A549 (cell line): ENCODE measurements at regions of chr3 and their contacts with region 1.

Region 1: DNA sequence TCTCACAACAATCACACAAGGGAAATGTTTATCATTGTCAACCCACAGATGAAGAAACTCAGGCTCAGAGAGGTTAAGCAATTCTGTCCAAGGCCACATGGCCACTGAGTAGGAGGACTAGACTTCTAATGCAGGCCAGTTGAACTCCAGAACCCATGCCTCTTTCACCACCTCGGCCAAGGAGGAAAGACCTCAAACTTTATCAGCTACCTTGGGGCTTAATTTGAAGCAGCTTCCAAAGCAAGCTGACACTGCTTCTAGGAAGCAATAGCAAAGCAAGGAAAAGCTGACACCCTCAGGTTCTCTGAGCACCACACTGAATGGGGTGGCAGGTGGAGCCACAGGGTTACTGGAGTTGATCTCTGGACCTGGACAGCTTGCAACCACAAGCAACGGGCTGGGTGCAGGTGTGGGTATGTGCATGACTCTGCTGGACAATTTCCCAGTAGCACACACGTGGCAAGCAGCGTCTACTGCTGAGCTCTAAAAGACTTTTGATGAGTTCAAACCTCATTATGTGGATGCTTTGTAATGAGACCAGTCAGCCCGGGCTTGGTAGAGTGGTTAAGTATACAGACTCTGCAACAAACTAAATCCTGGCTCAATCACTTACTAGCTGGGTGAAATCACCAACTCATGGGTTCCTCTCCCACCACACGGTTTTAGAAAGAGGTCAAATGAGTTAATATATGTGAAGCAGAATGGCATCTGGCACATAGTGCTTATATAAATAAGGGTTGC is 23.1 kb downstream of the CCNL1 start:
- DNase-seq: no peak
- ATAC-seq: peak; percentile 5 to 31; a peak in 4 of 6 replicates
- H3K4me3 ChIP-seq: no peak overlapping the region
- H3K27ac ChIP-seq: peak overlapping the region; percentile 26 to 59; a peak in 4 of 6 replicates
- H3K4me1 ChIP-seq: peaks cover 33% of the 10 kb centered on the region
- CTCF ChIP-seq: no peak
- EP300 ChIP-seq: no peak
- POLR2A ChIP-seq: no peak
- RAD21 ChIP-seq: no peak

Region 2: DNA sequence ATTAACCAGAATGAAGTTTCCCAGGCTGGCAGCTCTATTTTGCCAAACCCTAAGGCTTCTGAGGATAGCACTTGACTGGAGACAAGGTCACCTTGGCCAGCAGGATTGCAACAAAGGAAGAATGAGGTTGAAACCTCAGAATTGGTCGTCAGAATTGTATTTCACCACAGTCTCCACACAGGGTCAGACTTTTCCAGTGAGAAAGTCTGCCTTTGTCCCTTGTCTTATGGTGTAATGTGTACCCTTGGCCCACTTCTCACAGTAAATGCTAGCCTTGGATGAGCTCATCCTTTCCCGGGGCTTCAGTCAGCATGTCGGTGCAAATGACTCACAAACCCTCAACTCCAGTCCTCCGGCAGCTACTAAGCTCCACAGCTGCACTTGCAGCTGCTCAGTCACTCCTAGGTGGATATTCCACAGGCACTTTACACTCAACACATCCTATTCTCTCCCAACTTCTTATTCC is 601.6 kb before region 1 on chr3:
- CTCF ChIA-PET with region 1: interaction called, 17 read pairs
- POLR2A ChIA-PET with region 1: no interaction called
- DNase-seq: peak; percentile 62 to 87
- ATAC-seq: peak; percentile 93 to 94
- H3K4me3 ChIP-seq: no peak overlapping the region
- H3K27ac ChIP-seq: peak overlapping the region; percentile 31 to 73
- H3K4me1 ChIP-seq: peaks cover 41% of the 10 kb centered on the region
- CTCF ChIP-seq: peak; percentile 38
- EP300 ChIP-seq: no peak
- POLR2A ChIP-seq: no peak
- RAD21 ChIP-seq: peak; percentile 43 to 60; a peak in 4 of 5 replicates

Region 3: DNA sequence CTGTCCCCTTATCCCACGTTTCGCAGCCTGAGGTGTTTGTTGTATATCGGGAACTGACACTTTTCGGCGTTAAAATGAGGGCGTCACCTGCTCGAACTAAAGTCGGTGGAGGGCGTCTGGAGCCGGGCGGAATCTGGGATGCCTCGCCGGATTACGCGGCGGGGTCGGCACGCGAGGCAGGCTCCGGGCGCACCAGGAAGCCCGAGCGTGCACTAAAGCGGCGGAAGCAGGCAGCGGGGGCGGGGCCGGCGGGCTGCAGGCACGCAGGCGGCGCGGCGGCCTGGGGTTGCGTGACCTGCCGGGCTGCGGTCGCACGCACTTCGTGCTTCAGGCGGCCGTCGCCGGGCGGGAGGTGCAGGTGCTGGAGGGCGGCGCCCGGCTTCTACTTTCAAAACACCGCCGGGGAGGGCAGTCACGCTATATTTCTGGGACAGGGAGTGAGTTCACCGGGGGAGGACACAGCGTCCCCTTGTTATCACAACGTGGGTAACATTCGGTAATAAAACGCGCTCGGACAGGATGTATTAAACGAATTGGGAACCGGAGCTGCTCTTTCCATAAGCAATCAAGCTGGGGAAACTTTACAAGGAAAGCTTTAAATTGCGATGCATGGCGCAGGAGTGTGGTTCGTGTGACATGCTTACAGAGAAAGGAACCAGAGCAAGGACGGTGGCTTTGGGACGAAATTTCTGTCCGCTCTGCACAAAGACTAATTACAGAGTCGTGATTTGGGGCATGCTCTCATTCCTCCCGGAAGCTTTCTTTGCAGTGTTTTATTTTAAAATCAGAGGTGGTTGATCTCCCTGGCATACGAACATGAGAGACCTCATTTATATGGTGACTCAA is 319.8 kb before region 1 on chr3:
- CTCF ChIA-PET with region 1: interaction called, 10 read pairs
- POLR2A ChIA-PET with region 1: no interaction called
- DNase-seq: peak; percentile 49 to 91
- ATAC-seq: peak; percentile 81 to 82
- H3K4me3 ChIP-seq: peak overlapping the region; percentile 62
- H3K27ac ChIP-seq: peak overlapping the region; percentile 91 to 92
- H3K4me1 ChIP-seq: peaks cover 65% of the 10 kb centered on the region
- CTCF ChIP-seq: 0 out of 3 replicates have a peak, but pooled peaks have one; percentile 20
- EP300 ChIP-seq: peak; percentile 45 to 88; a peak in 3 of 5 replicates
- POLR2A ChIP-seq: peak; percentile 44
- RAD21 ChIP-seq: peak; percentile 20 to 34; a peak in 3 of 5 replicates

Region 4: GRCh38 chr3:157023226-157023625 is 113.6 kb before region 1 on chr3:
- CTCF ChIA-PET with region 1: no interaction called
- POLR2A ChIA-PET with region 1: no interaction called
- DNase-seq: no peak
- ATAC-seq: no peak
- H3K4me3 ChIP-seq: no peak overlapping the region
- H3K27ac ChIP-seq: no peak overlapping the region
- H3K4me1 ChIP-seq: no peaks in the 10 kb centered on the region
- CTCF ChIP-seq: no peak
- EP300 ChIP-seq: no peak
- POLR2A ChIP-seq: no peak
- RAD21 ChIP-seq: no peak

Region 5: GRCh38 chr3:157099326-157100095 is 37.3 kb before region 1 on chr3:
- CTCF ChIA-PET with region 1: interaction called, 30 read pairs
- POLR2A ChIA-PET with region 1: no interaction called
- DNase-seq: no peak
- ATAC-seq: no peak
- H3K4me3 ChIP-seq: no peak overlapping the region
- H3K27ac ChIP-seq: no peak overlapping the region
- H3K4me1 ChIP-seq: peaks cover 4% of the 10 kb centered on the region; the same call in 1 of the 3 replicates
- CTCF ChIP-seq: no peak
- EP300 ChIP-seq: no peak
- POLR2A ChIP-seq: no peak
- RAD21 ChIP-seq: no peak

Region 6: GRCh38 chr3:157122116-157122515 is 14.7 kb before region 1 on chr3:
- CTCF ChIA-PET with region 1: interaction called, 39 read pairs
- POLR2A ChIA-PET with region 1: no interaction called
- DNase-seq: peak; percentile 39 to 60
- ATAC-seq: peak; percentile 79 to 80
- H3K4me3 ChIP-seq: no peak overlapping the region
- H3K27ac ChIP-seq: peak overlapping the region; percentile 59 to 64; a peak in 4 of 6 replicates
- H3K4me1 ChIP-seq: peaks cover 51% of the 10 kb centered on the region
- CTCF ChIP-seq: no peak
- EP300 ChIP-seq: no peak
- POLR2A ChIP-seq: no peak
- RAD21 ChIP-seq: no peak